ENCODE measurements at regions of chr22 and their contacts with region 1.

Region 1: GRCh38 chr22:24772493-24773181 is 1.9 kb downstream of the PIWIL3 start:
- DNase-seq: no peak
- ATAC-seq: peak; percentile 30 to 65

Region 2: DNA sequence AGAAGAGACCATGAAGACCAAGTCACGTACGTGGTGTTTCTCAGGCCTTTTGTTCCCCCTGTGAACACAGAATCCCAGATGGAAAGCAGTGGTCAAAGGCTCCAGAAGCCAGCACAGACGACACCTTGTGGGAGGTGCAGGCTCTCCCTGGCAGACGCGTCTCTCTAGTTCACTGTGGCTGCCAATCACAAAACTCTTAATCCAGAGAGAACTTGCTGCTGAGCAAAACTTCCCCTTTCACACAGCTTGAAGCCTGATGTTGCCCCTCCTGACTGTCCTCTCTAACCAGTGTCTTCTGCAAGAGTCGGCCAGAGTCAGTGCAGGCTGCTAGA is 65.2 kb before region 1 on chr22:
- intact Hi-C with region 1: no loop called
- DNase-seq: no peak
- ATAC-seq: peak in 1 of 2 donors; percentile 38

Region 3: GRCh38 chr22:24727218-24727851 is 45.3 kb before region 1 on chr22:
- intact Hi-C with region 1: no loop called
- DNase-seq: peak; percentile 57
- ATAC-seq: peak; percentile 55 to 63

Region 4: GRCh38 chr22:24834845-24835570 is 62.4 kb after region 1 on chr22:
- intact Hi-C with region 1: loop called (anchors 5 to 10 kb)
- DNase-seq: no peak
- ATAC-seq: peak in 1 of 2 donors; percentile 57

Region 5: GRCh38 chr22:24845041-24845898 is 72.6 kb after region 1 on chr22:
- intact Hi-C with region 1: loop called in 1 of 2 experiments (anchors 5 kb)
- DNase-seq: peak; percentile 46
- ATAC-seq: peak; percentile 50 to 86